Posterior vena cava (tissue), 2 donors: ENCODE measurements at regions of chr4 and their contacts with region 1.

Region 1: GRCh38 chr4:39657465-39657864 is 18.8 kb upstream of the SMIM14 start:
- DNase-seq: no peak

Region 2: DNA sequence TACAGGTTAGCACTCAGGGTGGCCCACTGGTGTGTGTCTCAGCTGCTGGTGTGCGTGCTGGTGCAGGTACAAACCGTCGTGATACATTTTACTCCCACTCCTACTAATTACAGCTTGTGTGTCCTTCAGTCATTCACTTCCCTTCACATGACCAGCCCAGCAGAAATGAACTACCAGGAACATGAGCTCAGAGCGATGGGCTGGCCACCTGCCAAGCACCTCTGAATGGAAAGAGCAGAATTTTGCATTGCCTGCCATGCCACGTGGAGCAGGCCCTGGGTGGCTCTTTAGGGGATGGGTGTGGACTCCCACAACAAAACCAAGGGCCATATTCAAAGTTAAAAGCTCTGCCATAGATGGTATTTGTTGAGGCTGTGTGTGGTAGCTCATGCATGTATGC is 1889.9 kb before region 1 on chr4:
- intact Hi-C with region 1: no loop called
- DNase-seq: peak; percentile 92

Region 3: GRCh38 chr4:39469429-39470077 is 187.9 kb before region 1 on chr4:
- intact Hi-C with region 1: loop called in 1 of 2 experiments (anchors 5 kb)
- DNase-seq: no peak

Region 4: DNA sequence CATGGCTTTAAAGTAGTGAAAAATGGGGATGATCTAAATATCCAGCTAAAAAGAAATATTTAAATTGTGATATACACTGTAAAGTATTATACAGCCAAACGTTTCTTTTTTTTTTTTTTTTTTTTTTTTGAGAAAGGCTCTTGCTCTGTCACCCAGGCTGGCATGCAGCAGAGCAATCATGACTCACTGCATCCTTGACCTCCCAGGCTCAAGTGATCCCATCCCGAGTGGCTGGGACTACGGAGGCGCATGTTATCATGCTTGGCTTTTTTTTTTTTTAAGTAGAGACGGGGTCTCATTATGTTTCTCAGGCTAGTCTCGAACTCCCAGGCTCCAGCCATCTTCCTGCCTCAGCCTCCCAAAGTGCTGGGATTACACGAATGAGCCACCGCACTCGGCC is 35.9 kb before region 1 on chr4:
- intact Hi-C with region 1: no loop called
- DNase-seq: no peak

Region 5: GRCh38 chr4:39642885-39643550 is 14.4 kb before region 1 on chr4:
- intact Hi-C with region 1: no loop called
- DNase-seq: no peak